Cardiac septum (tissue), 1 donor: ENCODE measurements at regions of chr2 and their contacts with region 1.

Region 1: GRCh38 chr2:102240640-102241370 is 54.0 kb downstream of the IL1RL2 start:
- DNase-seq: peak; percentile 97

Region 2: DNA sequence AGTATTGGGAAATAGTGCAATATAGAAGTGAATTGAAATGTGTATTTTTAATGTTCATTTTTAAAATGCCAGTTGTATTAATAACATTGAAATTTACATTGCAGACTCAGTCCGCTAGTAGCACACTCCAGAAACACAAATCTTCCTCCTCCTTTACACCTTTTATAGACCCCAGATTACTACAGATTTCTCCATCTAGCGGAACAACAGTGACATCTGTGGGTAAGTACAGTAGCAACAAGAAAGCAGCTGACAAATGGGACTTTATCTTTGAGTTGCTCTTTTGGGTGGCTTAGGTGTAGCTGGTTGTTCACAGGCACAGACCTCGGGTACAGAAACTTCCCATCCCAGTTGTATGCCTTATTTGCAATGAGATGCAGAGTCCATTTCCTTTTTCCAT is 367.3 kb before region 1 on chr2:
- intact Hi-C with region 1: loop called (anchors 10 kb)
- DNase-seq: no peak

Region 3: DNA sequence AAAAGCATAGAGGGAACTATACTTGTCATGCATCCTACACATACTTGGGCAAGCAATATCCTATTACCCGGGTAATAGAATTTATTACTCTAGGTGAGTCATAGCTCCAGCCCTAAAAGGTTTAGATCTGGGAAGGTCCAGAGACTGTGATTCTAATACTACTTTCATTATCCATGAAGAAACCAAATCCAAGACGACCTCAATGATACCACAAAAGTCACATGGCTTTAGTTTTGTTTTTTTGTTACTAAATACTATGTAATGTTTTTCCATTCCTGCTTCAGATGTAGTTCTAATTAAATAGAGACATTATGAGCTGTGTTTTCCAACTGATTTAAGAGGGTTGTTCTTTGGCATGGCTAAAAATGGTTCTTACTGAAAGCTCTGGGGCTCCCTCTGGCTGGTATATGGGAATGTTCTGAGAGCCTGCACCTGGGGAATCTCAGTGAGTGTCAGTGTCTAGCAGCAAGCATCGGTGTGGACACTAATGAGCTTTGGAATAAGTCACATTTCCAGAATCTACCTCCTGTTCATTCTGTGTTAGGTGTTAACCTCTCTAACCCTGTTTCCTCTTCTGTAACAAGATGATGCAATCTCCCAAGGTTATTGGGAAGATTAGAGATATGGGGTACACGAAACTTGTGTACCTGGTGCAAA is 74.5 kb before region 1 on chr2:
- intact Hi-C with region 1: loop called (anchors 5 kb)
- DNase-seq: no peak

Region 4: DNA sequence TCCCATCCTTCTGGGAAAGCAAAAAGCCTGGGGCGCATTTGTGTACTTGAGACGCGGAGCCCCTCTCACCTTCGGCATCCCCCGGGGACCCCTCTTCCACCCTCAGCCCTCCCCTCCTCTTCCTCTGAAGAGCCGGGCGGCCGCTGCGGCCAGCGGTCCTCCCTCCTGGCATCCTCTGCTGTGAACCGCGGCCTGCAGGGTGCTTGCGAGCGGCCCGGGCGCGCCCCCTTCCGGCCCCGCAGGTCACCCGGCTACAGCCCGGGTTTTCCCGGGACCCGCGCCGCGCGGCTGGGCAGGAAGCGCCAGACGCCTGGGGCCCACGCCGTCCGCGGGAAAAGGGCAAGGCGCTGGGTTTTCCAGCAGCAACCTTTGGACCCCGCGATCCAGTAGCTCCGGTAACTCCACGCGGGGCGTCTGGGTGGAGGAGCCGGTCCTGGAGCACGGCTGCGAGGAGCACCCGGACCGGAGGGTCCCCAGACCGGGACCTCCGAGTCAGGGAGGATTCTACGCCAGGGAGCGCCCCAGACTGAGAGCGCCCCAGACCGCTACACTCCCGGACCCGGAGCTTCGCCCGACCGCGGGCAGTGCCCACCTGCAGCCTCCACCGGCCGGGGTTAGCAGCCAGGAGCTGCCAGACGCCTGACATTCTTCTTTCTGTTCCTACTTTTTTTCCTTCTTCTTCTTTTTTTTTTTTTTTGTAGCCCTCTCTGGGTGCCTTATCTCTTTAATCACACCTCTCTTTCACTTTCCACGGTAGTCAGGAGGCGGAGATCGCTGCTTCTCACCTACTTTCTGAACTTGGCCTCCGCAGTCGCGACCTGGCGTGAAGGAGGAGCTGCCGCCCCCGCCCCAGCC is 114.9 kb after region 1 on chr2 and contains the start of gene IL18R1:
- intact Hi-C with region 1: loop called (anchors 5 kb)
- DNase-seq: peak; percentile 92
- total RNA-seq, gene IL18R1: 1.3 TPM